ENCODE measurements at regions of chr20 and their contacts with region 1.

Region 1: DNA sequence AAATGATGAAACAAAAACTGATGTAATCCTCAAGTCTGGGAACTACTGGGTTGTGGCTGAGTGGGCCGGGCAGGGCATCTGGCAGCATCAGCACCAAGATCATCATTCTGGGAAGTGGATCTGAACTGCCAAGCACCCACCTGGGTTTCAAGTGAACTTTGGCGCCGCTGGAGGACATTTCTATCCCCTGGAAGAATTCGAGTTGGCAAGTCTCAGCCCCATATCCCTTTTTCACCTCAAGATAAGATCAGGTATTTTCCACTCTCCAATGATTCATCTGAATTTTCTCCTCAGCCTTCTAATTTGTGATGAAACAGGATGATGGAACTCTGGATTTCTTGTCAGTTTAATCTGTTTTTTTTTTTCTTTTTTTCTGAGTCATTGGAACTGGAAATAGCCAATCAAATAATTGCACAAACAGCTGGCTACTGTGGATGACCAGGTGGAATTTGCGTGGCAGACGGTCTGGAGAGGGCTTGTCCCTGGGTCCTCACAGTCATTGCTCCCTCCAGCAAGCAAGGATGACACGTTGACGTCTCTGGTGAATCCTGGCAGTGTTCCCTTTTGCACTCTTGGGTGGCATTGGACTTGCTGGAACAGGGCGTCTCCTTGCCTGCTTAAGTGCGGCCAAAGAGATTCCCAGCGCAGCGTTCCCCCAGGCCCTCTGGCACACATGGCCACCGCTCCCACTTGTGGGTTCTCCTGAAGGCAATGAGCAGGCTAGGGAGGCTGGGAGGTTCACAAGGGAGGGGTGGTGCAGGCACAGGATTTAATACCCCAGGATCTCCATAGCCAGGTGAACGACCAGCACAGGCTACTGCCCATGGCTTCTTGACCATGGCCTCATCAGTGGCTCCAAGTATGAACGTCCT is 80.4 kb downstream of the DHX35 start:
- DNase-seq: no peak
- H3K4me3 ChIP-seq: no peak overlapping the region
- H3K27ac ChIP-seq: peak overlapping the region in 1 of 2 donors; percentile 0
- H3K4me1 ChIP-seq: no peaks in the 10 kb centered on the region
- H3K27me3 ChIP-seq: no peaks in the 10 kb centered on the region
- CTCF ChIP-seq: no peak
- POLR2A ChIP-seq: no peak

Region 2: GRCh38 chr20:38985603-38986170 is 56.8 kb before region 1 on chr20:
- intact Hi-C with region 1: loop called (anchors 5 kb)
- DNase-seq: no peak
- H3K4me3 ChIP-seq: no peak overlapping the region
- H3K27ac ChIP-seq: peak overlapping the region; percentile 42 to 49
- H3K4me1 ChIP-seq: no peaks in the 10 kb centered on the region
- H3K27me3 ChIP-seq: no peaks in the 10 kb centered on the region
- CTCF ChIP-seq: no peak
- POLR2A ChIP-seq: no peak

Region 3: DNA sequence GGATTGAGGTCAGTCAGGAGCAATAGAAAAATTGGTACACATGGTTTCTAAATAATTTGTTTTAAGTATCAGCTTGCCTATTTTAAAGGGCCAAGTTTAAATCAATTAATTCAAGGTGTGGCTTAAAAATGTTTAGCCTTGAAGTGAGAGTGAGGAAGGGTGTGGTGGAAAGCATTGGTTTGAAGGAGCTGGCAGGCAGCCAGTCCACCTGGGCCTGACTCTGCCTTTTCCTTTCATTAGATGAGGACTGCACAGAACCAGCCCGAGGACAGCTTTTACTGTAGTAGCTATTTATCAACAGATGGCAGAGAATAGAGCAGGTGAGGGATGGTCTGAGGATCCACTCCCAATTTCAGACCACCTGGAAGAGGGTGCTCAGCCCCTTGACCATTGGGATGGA is 38.0 kb before region 1 on chr20:
- intact Hi-C with region 1: no loop called
- DNase-seq: no peak
- H3K4me3 ChIP-seq: no peak overlapping the region
- H3K27ac ChIP-seq: no peak overlapping the region
- H3K4me1 ChIP-seq: no peaks in the 10 kb centered on the region
- H3K27me3 ChIP-seq: no peaks in the 10 kb centered on the region
- CTCF ChIP-seq: no peak
- POLR2A ChIP-seq: no peak

Region 4: GRCh38 chr20:39225536-39225935 is 183.0 kb after region 1 on chr20:
- intact Hi-C with region 1: no loop called
- DNase-seq: no peak
- H3K4me3 ChIP-seq: no peak overlapping the region
- H3K27ac ChIP-seq: no peak overlapping the region
- H3K4me1 ChIP-seq: no peaks in the 10 kb centered on the region
- H3K27me3 ChIP-seq: no peaks in the 10 kb centered on the region
- CTCF ChIP-seq: no peak
- POLR2A ChIP-seq: no peak